WTC11 (cell line): ENCODE measurements at regions of chr13 and their contacts with region 1.

Region 1: GRCh38 chr13:48233046-48233907 is at the start of gene ITM2B:
- DNase-seq: peak; percentile 70
- ATAC-seq: peak; percentile 77
- H3K4me3 Mint-ChIP-seq: peak within 1 kb of the TSS; percentile 93
- H3K27ac Mint-ChIP-seq: peak within 1 kb of the TSS; percentile 91
- H3K4me1 Mint-ChIP-seq: peaks cover 45% of the 10 kb centered on the region
- H3K27me3 Mint-ChIP-seq: peaks cover 15% of the 10 kb centered on the region
- CTCF ChIP-seq: no peak
- total RNA-seq, gene ITM2B: 177 to 186 TPM (median 178 TPM) in 3 replicates

Region 2: DNA sequence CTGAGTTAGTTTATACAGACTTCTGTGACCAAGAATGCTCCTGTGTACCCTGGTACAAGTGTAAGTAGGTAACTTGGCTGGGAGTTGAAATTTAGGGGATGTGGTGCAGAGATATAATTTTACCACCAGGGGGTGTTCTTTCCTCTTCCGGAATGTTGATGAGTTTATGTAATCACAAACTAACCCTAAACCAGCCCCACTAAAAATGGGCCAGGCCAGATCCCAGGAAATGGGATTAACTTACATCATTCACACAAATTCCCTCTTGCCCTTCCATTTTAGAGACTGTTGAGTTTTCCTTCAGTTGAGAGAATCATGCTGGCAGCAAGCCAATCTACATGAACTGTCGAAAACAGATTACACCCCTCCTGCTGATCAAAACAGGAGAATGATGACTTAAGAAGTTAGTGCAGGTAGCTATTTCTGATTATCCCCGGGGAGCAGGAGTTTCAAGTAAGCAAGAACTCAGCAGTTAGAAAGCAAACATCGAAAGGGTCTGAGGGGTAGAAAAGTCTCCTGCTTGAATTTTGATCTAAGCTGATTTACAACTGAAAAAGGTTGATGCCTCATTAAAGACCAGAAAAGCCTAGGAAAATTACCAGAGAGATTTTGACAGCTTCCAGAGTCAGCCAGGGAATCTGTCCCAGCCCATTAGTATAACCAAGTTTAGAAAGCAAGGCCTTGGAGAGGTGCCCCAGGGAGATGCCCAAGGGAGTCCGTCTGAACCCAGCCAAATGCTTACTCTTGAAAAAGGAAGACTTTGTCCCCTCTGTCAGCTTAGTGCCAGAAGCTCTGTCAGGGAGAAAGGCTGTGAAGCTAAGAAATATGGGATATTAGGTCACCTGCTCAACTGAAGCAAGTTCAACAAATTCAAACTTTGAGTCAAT is 106.1 kb before region 1 on chr13:
- CTCF ChIA-PET with region 1: interaction called, 11 read pairs
- POLR2A ChIA-PET with region 1: interaction called, 5 read pairs
- DNase-seq: peak; percentile 17
- ATAC-seq: peak; percentile 88
- H3K4me3 Mint-ChIP-seq: peak overlapping the region; percentile 20; the same call in 1 of the 2 replicates
- H3K27ac Mint-ChIP-seq: peak overlapping the region; percentile 95
- H3K4me1 Mint-ChIP-seq: peaks cover 19% of the 10 kb centered on the region
- H3K27me3 Mint-ChIP-seq: peaks cover 3% of the 10 kb centered on the region; the same call in 1 of the 2 replicates
- CTCF ChIP-seq: peak; percentile 63; the same call in 1 of the 2 replicates

Region 3: GRCh38 chr13:48600374-48601364 is 367.4 kb after region 1 on chr13:
- CTCF ChIA-PET with region 1: no interaction called
- POLR2A ChIA-PET with region 1: no interaction called
- DNase-seq: no peak
- ATAC-seq: peak; percentile 48
- H3K4me3 Mint-ChIP-seq: no peak overlapping the region
- H3K27ac Mint-ChIP-seq: no peak overlapping the region
- H3K4me1 Mint-ChIP-seq: peaks cover 23% of the 10 kb centered on the region
- H3K27me3 Mint-ChIP-seq: peaks cover 2% of the 10 kb centered on the region; the same call in 1 of the 2 replicates
- CTCF ChIP-seq: no peak